CD8-positive, alpha-beta T cell (primary cell): ENCODE measurements at regions of chr3 and their contacts with region 1.

Region 1: DNA sequence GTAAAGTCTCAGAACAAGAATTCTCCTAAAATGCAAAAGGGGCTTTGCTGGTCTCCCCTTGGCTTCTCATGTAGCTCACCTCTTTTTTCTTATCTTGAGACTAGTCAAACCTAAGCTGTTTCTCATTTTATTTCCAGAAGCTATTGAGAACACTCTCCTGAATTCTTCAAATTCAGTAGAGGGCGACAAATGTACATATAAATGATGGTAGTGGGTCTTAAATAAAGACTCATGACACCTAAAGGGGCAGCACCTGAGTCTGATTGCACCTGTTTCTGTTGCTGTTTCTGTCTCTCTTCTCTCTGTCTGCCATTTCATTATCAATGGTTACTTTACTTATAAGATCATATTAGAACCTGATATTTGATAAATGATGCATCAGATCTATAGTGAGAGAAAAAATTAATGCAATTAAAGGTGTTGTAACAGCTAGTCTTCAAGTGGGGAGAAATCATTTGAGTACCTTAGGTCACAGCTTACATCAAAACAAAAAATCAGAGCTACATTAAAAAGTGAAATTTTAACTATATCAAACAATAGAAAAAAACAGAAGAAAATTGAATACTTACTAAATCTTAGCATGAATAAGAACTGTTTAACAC is 7.0 kb downstream of the ADIPOQ start:
- DNase-seq: peak in 2 of 9 experiments; percentile 70 to 81
- ATAC-seq: peak; percentile 95
- H3K4me3 ChIP-seq: no peak overlapping the region
- H3K4me3 Mint-ChIP-seq: no peak overlapping the region
- H3K27ac ChIP-seq: no peak overlapping the region
- H3K27ac Mint-ChIP-seq: no peak overlapping the region
- H3K4me1 ChIP-seq: no peaks in the 10 kb centered on the region
- H3K4me1 Mint-ChIP-seq: peaks cover 19% of the 10 kb centered on the region
- H3K27me3 ChIP-seq: peaks cover 0 to 3% of the 10 kb centered on the region in 2 experiments
- H3K27me3 Mint-ChIP-seq: peaks cover 4% of the 10 kb centered on the region
- CTCF ChIP-seq: peak; percentile 73

Region 2: DNA sequence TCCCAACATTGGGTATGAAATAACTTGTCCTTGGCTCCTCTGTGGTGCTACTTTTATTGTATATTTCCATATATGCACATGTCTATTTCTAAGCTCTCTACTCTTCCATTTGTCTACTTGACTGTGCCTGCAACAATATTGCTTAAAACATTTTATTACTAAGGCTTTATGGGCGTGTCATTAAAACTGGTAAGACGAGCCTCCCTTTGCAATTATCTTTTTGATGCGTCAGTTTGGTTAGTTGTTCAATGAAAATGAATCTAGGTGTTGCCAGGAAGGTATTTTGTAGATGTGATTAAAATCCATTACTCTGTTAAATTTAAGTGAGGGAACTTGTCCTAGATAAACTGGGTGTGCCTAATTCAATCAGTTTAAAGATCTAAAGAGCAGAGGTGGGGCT is 898.8 kb before region 1 on chr3:
- CTCF ChIA-PET with region 1: no interaction called
- POLR2A ChIA-PET with region 1: no interaction called
- intact Hi-C with region 1: no loop called
- DNase-seq: no peak
- ATAC-seq: no peak
- H3K4me3 ChIP-seq: no peak overlapping the region
- H3K4me3 Mint-ChIP-seq: no peak overlapping the region
- H3K27ac ChIP-seq: no peak overlapping the region
- H3K27ac Mint-ChIP-seq: no peak overlapping the region
- H3K4me1 ChIP-seq: no peaks in the 10 kb centered on the region
- H3K4me1 Mint-ChIP-seq: no peaks in the 10 kb centered on the region
- H3K27me3 ChIP-seq: peaks cover 0 to 2% of the 10 kb centered on the region in 2 experiments
- H3K27me3 Mint-ChIP-seq: peaks cover 12% of the 10 kb centered on the region
- CTCF ChIP-seq: no peak

Region 3: DNA sequence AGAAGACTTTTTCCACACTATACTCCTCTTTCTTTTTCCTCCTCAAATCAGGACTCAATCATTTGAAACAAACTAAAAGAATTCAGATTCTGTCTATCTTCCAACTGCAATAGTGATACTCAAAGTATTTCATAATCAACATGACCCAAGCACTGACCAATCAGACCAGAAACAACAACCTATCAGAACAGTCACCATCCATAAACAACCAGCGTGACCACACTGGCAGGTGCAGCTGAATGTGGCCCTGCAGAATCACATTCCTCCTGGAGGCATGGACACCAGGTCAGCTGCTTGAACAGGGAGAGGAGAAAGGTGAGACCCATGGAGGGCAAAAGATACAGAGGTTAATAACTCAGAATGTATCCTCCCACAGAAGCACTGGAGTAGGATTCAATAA is 170.3 kb before region 1 on chr3:
- CTCF ChIA-PET with region 1: no interaction called
- POLR2A ChIA-PET with region 1: no interaction called
- intact Hi-C with region 1: no loop called
- DNase-seq: no peak
- ATAC-seq: no peak
- H3K4me3 ChIP-seq: no peak overlapping the region
- H3K4me3 Mint-ChIP-seq: no peak overlapping the region
- H3K27ac ChIP-seq: no peak overlapping the region
- H3K27ac Mint-ChIP-seq: no peak overlapping the region
- H3K4me1 ChIP-seq: no peaks in the 10 kb centered on the region
- H3K4me1 Mint-ChIP-seq: no peaks in the 10 kb centered on the region
- H3K27me3 ChIP-seq: peaks cover 0 to 10% of the 10 kb centered on the region in 2 experiments
- H3K27me3 Mint-ChIP-seq: peaks cover 41% of the 10 kb centered on the region
- CTCF ChIP-seq: no peak

Region 4: GRCh38 chr3:186760141-186760813 is 89.2 kb before region 1 on chr3:
- CTCF ChIA-PET with region 1: no interaction called
- POLR2A ChIA-PET with region 1: no interaction called
- intact Hi-C with region 1: no loop called
- DNase-seq: no peak
- ATAC-seq: no peak
- H3K4me3 ChIP-seq: no peak overlapping the region
- H3K4me3 Mint-ChIP-seq: no peak overlapping the region
- H3K27ac ChIP-seq: no peak overlapping the region
- H3K27ac Mint-ChIP-seq: no peak overlapping the region
- H3K4me1 ChIP-seq: no peaks in the 10 kb centered on the region
- H3K4me1 Mint-ChIP-seq: no peaks in the 10 kb centered on the region
- H3K27me3 ChIP-seq: no peaks in the 10 kb centered on the region
- H3K27me3 Mint-ChIP-seq: no peaks in the 10 kb centered on the region
- CTCF ChIP-seq: no peak

Region 5: GRCh38 chr3:186909078-186909853 is 59.8 kb after region 1 on chr3:
- CTCF ChIA-PET with region 1: interaction called, 9 read pairs
- POLR2A ChIA-PET with region 1: interaction called, 9 read pairs
- intact Hi-C with region 1: loop called in 1 of 2 experiments (anchors 2 kb)
- DNase-seq: peak; percentile 60 to 91 (median 87)
- ATAC-seq: peak; percentile 91
- H3K4me3 ChIP-seq: peak overlapping the region; percentile 23 to 43
- H3K4me3 Mint-ChIP-seq: peak overlapping the region; percentile 72
- H3K27ac ChIP-seq: peak overlapping the region; percentile 53 to 69
- H3K27ac Mint-ChIP-seq: peak overlapping the region; percentile 95
- H3K4me1 ChIP-seq: peaks cover 17% of the 10 kb centered on the region
- H3K4me1 Mint-ChIP-seq: peaks cover 34% of the 10 kb centered on the region
- H3K27me3 ChIP-seq: no peaks in the 10 kb centered on the region
- H3K27me3 Mint-ChIP-seq: no peaks in the 10 kb centered on the region
- CTCF ChIP-seq: no peak

Region 6: DNA sequence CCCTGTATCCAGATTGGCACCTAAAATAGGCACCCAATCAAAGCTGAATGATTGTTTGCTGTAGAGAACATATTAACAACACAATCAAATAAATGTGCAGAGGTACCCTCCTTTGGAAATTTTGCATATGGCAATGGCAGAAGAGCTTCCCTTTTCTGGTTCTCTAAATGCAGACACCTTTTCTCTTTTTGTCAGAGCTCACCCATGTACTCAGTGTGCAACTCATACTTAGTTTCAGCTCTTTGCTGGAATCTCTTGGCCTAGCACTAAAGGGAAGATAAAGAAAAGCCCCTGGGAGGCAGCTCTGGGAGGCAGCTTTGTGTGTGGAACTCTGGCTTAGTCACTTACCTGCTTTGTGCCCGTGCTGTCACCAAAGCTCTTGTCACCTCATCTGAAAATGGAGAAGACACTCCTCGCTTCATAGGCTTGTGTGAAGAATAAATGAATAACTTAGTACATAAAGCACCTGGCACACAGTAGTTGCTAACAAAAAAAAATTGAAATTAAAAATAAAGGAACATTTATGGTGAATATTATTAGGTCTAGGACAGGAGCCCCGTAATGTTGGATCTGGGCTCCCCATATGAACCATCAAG is 109.7 kb after region 1 on chr3:
- CTCF ChIA-PET with region 1: interaction called, 19 read pairs
- POLR2A ChIA-PET with region 1: interaction called, 4 read pairs
- intact Hi-C with region 1: no loop called
- DNase-seq: no peak
- ATAC-seq: no peak
- H3K4me3 ChIP-seq: no peak overlapping the region
- H3K4me3 Mint-ChIP-seq: no peak overlapping the region
- H3K27ac ChIP-seq: no peak overlapping the region
- H3K27ac Mint-ChIP-seq: peak overlapping the region; percentile 78
- H3K4me1 ChIP-seq: peaks cover 4% of the 10 kb centered on the region
- H3K4me1 Mint-ChIP-seq: peaks cover 58% of the 10 kb centered on the region
- H3K27me3 ChIP-seq: no peaks in the 10 kb centered on the region
- H3K27me3 Mint-ChIP-seq: no peaks in the 10 kb centered on the region
- CTCF ChIP-seq: no peak

Region 7: GRCh38 chr3:187011915-187012314 is 162.4 kb after region 1 on chr3:
- CTCF ChIA-PET with region 1: interaction called, 6 read pairs
- POLR2A ChIA-PET with region 1: interaction called, 3 read pairs
- intact Hi-C with region 1: loop called in 1 of 2 experiments (anchors 5 kb)
- DNase-seq: peak in 1 of 9 experiments; percentile 19
- ATAC-seq: no peak
- H3K4me3 ChIP-seq: no peak overlapping the region
- H3K4me3 Mint-ChIP-seq: peak overlapping the region; percentile 29
- H3K27ac ChIP-seq: peak overlapping the region in 1 of 2 experiments; percentile 58
- H3K27ac Mint-ChIP-seq: peak overlapping the region; percentile 98
- H3K4me1 ChIP-seq: peaks cover 38% of the 10 kb centered on the region
- H3K4me1 Mint-ChIP-seq: peaks cover 75% of the 10 kb centered on the region
- H3K27me3 ChIP-seq: no peaks in the 10 kb centered on the region
- H3K27me3 Mint-ChIP-seq: no peaks in the 10 kb centered on the region
- CTCF ChIP-seq: no peak

Region 8: GRCh38 chr3:187066228-187066995 is 216.9 kb after region 1 on chr3:
- CTCF ChIA-PET with region 1: interaction called, 46 read pairs
- POLR2A ChIA-PET with region 1: interaction called, 4 read pairs
- intact Hi-C with region 1: loop called (anchors 1 kb)
- DNase-seq: peak; percentile 15 to 80 (median 54)
- ATAC-seq: peak; percentile 92
- H3K4me3 ChIP-seq: no peak overlapping the region
- H3K4me3 Mint-ChIP-seq: no peak overlapping the region
- H3K27ac ChIP-seq: no peak overlapping the region
- H3K27ac Mint-ChIP-seq: peak overlapping the region; percentile 94
- H3K4me1 ChIP-seq: peaks cover 35% of the 10 kb centered on the region
- H3K4me1 Mint-ChIP-seq: peaks cover 64% of the 10 kb centered on the region
- H3K27me3 ChIP-seq: no peaks in the 10 kb centered on the region
- H3K27me3 Mint-ChIP-seq: no peaks in the 10 kb centered on the region
- CTCF ChIP-seq: peak; percentile 44

Region 9: GRCh38 chr3:187164885-187165543 is 315.5 kb after region 1 on chr3:
- CTCF ChIA-PET with region 1: interaction called, 45 read pairs
- POLR2A ChIA-PET with region 1: no interaction called
- intact Hi-C with region 1: loop called (anchors 1 kb)
- DNase-seq: peak in 6 of 9 experiments; percentile 8 to 83 (median 38)
- ATAC-seq: peak; percentile 77
- H3K4me3 ChIP-seq: no peak overlapping the region
- H3K4me3 Mint-ChIP-seq: no peak overlapping the region
- H3K27ac ChIP-seq: no peak overlapping the region
- H3K27ac Mint-ChIP-seq: no peak overlapping the region
- H3K4me1 ChIP-seq: no peaks in the 10 kb centered on the region
- H3K4me1 Mint-ChIP-seq: peaks cover 3% of the 10 kb centered on the region
- H3K27me3 ChIP-seq: peaks cover 0 to 3% of the 10 kb centered on the region in 2 experiments
- H3K27me3 Mint-ChIP-seq: no peaks in the 10 kb centered on the region
- CTCF ChIP-seq: peak; percentile 90